Esophagus muscularis mucosa (tissue), 4 donors: ENCODE measurements at regions of chr2 and their contacts with region 1.

Region 1: GRCh38 chr2:84970868-84971509 is at the start of gene KCMF1:
- DNase-seq: no peak
- H3K4me3 ChIP-seq: peak within 1 kb of the TSS; percentile 92 to 98 (median 94)
- H3K27ac ChIP-seq: peak within 1 kb of the TSS; percentile 95 to 99 (median 98)
- H3K4me1 ChIP-seq: peaks cover 26 to 78% (median 64%) of the 10 kb centered on the region in 4 donors
- H3K27me3 ChIP-seq: no peaks in the 10 kb centered on the region
- CTCF ChIP-seq: no peak
- EP300 ChIP-seq: no peak
- POLR2A ChIP-seq: no peak
- total RNA-seq, gene KCMF1: 48.0 to 73.1 (median 65.4) TPM

Region 2: GRCh38 chr2:84905181-84906107 is 65.5 kb before region 1 on chr2 and contains the start of gene TMSB10:
- intact Hi-C with region 1: loop called (anchors 5 kb)
- DNase-seq: peak; percentile 97
- H3K4me3 ChIP-seq: peak within 1 kb of the TSS; percentile 73 to 97 (median 92)
- H3K27ac ChIP-seq: peak within 1 kb of the TSS; percentile 88 to 96 (median 94)
- H3K4me1 ChIP-seq: peaks cover 11 to 25% (median 19%) of the 10 kb centered on the region in 4 donors
- H3K27me3 ChIP-seq: no peaks in the 10 kb centered on the region
- CTCF ChIP-seq: peak in 2 of 3 experiments; percentile 9 to 27
- EP300 ChIP-seq: peak; percentile 41
- POLR2A ChIP-seq: peak; percentile 93
- total RNA-seq, gene TMSB10: 1,300 to 2,755 (median 1,711) TPM

Region 3: DNA sequence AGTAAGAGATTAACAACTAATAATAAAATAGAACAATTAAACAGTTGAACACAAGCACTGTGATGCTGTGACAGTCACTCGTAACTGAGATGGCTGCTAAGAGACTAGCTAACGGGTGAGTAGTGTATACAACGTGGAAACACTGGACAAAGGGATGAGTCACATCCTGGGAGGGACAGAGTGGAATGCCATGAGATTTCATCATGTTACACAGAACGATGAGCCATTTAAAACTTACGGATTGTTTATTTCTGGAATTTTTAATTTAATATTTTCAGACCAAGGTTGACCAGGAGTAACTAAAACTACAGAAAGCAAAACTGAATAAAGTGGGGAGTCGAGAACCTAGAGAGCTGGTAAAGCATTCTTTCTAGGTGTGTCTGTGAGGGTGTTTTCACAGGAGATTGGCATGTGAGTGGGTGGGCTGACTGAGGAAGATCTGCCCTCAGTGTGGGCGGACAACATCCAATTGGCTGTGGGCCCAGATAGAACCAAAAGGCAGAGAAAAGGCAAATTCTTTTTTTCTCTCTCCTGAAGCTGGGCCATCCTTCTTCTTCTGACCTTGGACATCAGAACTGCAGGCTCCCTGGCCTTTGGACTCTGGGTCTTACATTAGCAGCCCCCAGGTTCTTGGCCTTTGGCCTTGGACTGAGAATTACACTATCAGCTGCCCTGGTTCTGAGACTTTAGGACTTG is 51.0 kb before region 1 on chr2:
- intact Hi-C with region 1: loop called (anchors 5 kb)
- DNase-seq: no peak
- H3K4me3 ChIP-seq: peak overlapping the region; percentile 14 to 40 (median 30)
- H3K27ac ChIP-seq: peak overlapping the region; percentile 80 to 89 (median 87)
- H3K4me1 ChIP-seq: peaks cover 10 to 23% (median 17%) of the 10 kb centered on the region in 4 donors
- H3K27me3 ChIP-seq: no peaks in the 10 kb centered on the region
- CTCF ChIP-seq: no peak
- EP300 ChIP-seq: no peak
- POLR2A ChIP-seq: no peak